Mammary epithelial cell (primary cell): ENCODE measurements at regions of chr18 and their contacts with region 1.

Region 1: GRCh38 chr18:31454066-31454708 is 6.6 kb downstream of the DSG3 start:
- DNase-seq: peak; percentile 95
- H3K4me3 ChIP-seq: peak overlapping the region in 2 of 3 experiments; percentile 12 to 18
- H3K27ac ChIP-seq: peak overlapping the region; percentile 99
- H3K4me1 ChIP-seq: peaks cover 39% of the 10 kb centered on the region
- H3K27me3 ChIP-seq: no peaks in the 10 kb centered on the region
- CTCF ChIP-seq: no peak

Region 2: GRCh38 chr18:31490387-31490786 is 36.2 kb after region 1 on chr18:
- CTCF ChIA-PET with region 1: no interaction called
- dilution Hi-C with region 1: no loop called
- in situ Hi-C with region 1: no loop called
- intact Hi-C with region 1: loop called (anchors 2 kb)
- DNase-seq: peak; percentile 86
- H3K4me3 ChIP-seq: no peak overlapping the region
- H3K27ac ChIP-seq: peak overlapping the region; percentile 92
- H3K4me1 ChIP-seq: peaks cover 53% of the 10 kb centered on the region
- H3K27me3 ChIP-seq: no peaks in the 10 kb centered on the region
- CTCF ChIP-seq: no peak

Region 3: DNA sequence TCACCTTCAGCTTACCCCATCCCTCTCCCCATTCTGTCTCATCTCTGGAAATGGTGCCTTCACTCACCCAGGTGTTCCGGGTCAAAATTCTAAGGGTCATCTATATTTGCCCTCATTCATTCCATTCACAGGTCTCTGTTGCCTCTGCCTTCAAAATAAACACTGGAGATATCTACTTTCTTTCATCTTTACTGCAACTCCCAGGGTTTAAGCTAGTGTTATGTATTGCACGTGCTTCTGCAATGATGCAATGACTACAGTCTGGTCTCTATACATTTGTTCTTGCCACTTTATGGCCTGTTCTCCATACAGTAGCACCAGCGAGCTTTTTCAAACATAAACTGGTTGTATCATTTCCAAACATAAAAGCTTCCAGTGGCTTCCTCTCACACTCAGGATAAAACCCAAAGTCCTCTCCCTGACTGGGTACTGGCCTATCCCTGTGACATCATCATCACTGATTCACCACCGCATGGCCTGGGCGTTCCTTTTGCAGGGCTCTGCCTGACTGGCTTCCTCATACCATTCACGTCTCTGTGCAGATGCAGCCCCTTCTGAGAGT is 58.1 kb after region 1 on chr18:
- CTCF ChIA-PET with region 1: no interaction called
- dilution Hi-C with region 1: no loop called
- in situ Hi-C with region 1: no loop called
- intact Hi-C with region 1: no loop called
- DNase-seq: peak; percentile 91
- H3K4me3 ChIP-seq: no peak overlapping the region
- H3K27ac ChIP-seq: peak overlapping the region; percentile 82
- H3K4me1 ChIP-seq: peaks cover 56% of the 10 kb centered on the region
- H3K27me3 ChIP-seq: no peaks in the 10 kb centered on the region
- CTCF ChIP-seq: no peak

Region 4: GRCh38 chr18:31533236-31533635 is 79.0 kb after region 1 on chr18:
- CTCF ChIA-PET with region 1: no interaction called
- dilution Hi-C with region 1: no loop called
- in situ Hi-C with region 1: no loop called
- intact Hi-C with region 1: no loop called
- DNase-seq: no peak
- H3K4me3 ChIP-seq: no peak overlapping the region
- H3K27ac ChIP-seq: no peak overlapping the region
- H3K4me1 ChIP-seq: no peaks in the 10 kb centered on the region
- H3K27me3 ChIP-seq: no peaks in the 10 kb centered on the region
- CTCF ChIP-seq: no peak

Region 5: DNA sequence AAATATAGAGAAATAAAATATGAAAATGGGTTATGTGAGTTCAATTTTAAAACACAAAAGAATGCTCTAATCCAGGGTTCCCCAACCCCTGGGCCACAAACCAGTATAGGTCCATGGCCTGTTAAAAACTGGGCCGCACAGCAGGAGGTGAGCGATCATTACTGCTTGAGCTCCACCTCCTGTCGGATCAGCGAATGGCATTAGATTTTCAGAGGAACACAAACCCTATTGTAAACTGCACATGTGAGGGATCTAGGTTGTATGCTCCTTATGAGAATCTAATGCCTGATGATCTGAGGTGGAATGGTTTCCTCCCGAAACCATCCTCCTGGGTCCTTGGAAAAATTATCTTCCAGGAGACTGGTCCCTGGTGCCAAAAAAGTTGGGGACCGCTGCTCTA is 172.2 kb after region 1 on chr18:
- CTCF ChIA-PET with region 1: no interaction called
- dilution Hi-C with region 1: no loop called
- in situ Hi-C with region 1: no loop called
- intact Hi-C with region 1: no loop called
- DNase-seq: no peak
- H3K4me3 ChIP-seq: no peak overlapping the region
- H3K27ac ChIP-seq: no peak overlapping the region
- H3K4me1 ChIP-seq: no peaks in the 10 kb centered on the region
- H3K27me3 ChIP-seq: no peaks in the 10 kb centered on the region
- CTCF ChIP-seq: no peak